ENCODE measurements at regions of chr14 and their contacts with region 1.

Region 1: GRCh38 chr14:100383727-100384158 is 60.6 kb downstream of the SLC25A47 start:
- DNase-seq: peak; percentile 63
- ATAC-seq: peak; percentile 79

Region 2: GRCh38 chr14:100049220-100049619 is 334.5 kb before region 1 on chr14:
- intact Hi-C with region 1: no loop called
- DNase-seq: no peak
- ATAC-seq: peak; percentile 66

Region 3: GRCh38 chr14:100440187-100440631 is 56.5 kb after region 1 on chr14:
- intact Hi-C with region 1: no loop called
- DNase-seq: peak; percentile 81
- ATAC-seq: peak; percentile 95

Region 4: DNA sequence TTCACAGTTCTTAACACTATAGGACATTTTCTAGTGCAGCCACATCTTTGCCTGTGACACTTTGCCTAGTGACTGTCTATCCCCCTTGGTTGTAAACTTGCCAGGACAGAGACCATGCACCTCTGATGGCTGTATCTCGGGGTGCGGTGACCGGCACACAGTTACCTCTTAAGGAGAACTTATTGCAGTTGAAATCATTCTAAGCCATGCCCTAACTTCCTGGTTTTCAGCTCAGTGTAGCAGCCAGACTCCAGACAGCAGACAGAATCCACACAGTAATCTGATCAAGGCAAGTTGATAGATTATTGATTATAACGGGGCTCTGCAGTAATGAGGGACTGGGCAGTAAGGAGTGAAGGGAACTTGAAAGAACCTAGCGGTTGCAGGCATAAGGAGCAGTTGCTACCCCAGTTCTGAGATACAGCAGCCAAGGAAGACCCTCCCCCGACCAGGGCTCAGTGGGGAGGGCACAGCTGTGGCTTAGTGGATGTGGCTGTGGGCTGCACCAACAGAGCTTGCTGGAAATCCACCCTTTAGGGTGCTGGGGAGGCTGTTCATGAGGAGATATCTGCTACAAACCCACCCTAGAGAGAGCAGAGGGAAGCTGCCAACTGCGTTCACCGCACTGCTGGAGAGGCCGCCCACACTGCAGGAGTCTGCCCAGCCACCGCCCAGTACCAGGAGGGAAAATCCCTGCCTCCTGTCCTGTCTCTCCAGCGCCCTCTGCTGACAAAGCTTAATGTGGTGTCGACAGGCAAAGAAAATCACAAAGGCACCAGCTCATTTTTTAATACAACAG is 261.6 kb after region 1 on chr14:
- intact Hi-C with region 1: loop called (anchors 5 kb)
- DNase-seq: peak; percentile 81
- ATAC-seq: peak; percentile 88

Region 5: GRCh38 chr14:101628471-101628966 is 1244.8 kb after region 1 on chr14:
- intact Hi-C with region 1: loop called (anchors 5 kb)
- DNase-seq: peak; percentile 87
- ATAC-seq: peak; percentile 94